Kidney (tissue), 22 donors: ENCODE measurements at regions of chr16 and their contacts with region 1.

Region 1: DNA sequence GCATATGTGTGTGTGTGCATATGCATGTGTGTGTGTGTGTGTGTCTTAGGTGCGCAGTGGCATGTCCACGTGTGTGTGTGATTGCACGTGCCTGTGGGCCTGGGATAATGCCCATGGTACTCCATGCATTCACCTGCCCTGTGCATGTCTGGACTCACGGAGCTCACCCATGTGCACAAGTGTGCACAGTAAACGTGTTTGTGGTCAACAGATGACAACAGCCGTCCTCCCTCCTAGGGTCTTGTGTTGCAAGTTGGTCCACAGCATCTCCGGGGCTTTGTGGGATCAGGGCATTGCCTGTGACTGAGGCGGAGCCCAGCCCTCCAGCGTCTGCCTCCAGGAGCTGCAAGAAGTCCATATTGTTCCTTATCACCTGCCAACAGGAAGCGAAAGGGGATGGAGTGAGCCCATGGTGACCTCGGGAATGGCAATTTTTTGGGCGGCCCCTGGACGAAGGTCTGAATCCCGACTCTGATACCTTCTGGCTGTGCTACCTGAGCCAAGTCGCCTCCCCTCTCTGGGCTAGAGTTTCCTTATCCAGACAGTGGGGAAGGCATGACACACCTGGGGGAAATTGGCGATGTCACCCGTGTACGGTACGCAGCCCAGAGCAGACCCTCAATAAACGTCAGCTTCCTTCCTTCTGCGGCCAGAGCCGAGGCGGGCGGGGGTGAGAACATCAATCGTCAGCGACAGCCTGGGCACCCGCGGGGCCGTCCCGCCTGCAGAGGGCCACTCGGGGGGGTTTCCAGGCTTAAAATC is 47.6 kb downstream of the IL21R start:
- DNase-seq: peak in 3 of 5 donors; percentile 27 to 57 (median 30)
- H3K4me3 ChIP-seq: no peak overlapping the region
- H3K27ac ChIP-seq: no peak overlapping the region
- H3K4me1 ChIP-seq: peaks cover 0 to 12% (median 0%) of the 10 kb centered on the region in 3 donors
- H3K27me3 ChIP-seq: no peaks in the 10 kb centered on the region
- CTCF ChIP-seq: no peak

Region 2: DNA sequence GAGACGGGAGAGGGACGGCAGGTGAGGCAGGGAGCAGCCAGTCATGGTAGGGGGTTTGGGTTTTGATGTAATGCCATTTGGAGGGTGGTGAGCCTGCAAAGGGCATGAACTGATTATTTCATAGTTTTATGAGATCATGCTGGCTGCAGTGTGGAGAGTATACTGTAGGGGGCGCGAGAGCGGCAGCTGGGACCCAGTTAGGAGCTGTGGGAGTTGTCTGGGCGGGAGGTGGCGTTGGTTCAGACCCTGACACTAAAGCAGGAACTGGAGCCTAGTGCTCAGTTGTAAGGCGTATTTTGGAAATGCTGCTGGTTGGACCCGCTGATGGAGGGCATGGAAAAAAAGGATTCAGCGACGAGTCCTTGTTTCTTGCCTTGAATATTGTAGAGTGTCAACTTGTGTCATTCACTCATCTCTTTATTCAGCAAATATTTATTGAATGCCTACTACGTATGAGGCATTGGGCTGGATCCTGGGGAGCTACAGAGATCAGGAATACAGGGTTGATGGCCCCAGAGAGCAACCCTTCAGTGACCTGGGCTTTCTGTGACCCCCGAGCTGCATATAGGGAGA is 270.0 kb before region 1 on chr16:
- intact Hi-C with region 1: loop called (anchors 10 kb)
- DNase-seq: peak; percentile 71 to 92 (median 82)
- H3K4me3 ChIP-seq: no peak overlapping the region
- H3K27ac ChIP-seq: no peak overlapping the region
- H3K4me1 ChIP-seq: peaks cover 0 to 2% (median 0%) of the 10 kb centered on the region in 3 donors
- H3K27me3 ChIP-seq: no peaks in the 10 kb centered on the region
- CTCF ChIP-seq: peak; percentile 80

Region 3: GRCh38 chr16:27387724-27388123 is 61.9 kb before region 1 on chr16:
- intact Hi-C with region 1: loop called (anchors 10 kb)
- DNase-seq: no peak
- H3K4me3 ChIP-seq: no peak overlapping the region
- H3K27ac ChIP-seq: no peak overlapping the region
- H3K4me1 ChIP-seq: no peaks in the 10 kb centered on the region
- H3K27me3 ChIP-seq: no peaks in the 10 kb centered on the region
- CTCF ChIP-seq: no peak